ENCODE measurements at regions of chr10 and their contacts with region 1.

Region 1: DNA sequence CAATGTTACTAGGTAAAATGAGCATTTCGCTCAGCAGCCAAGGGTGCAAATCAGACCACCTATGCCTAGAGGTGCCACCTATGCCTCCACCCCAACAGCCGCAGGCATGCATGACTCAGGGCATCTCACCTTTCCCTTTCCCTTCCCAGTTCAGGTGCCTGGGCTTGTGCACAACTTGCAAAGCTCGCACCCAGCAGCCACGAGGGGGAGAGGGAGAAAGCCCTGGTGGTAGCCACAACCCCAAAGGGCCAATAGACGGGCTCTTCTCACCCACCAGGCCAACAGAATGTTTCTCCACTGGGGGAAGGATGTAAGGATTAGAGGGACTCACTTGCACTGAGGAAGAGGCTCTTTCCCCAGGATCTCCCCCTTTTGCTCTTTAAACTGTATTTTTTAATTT is 462.3 kb upstream of the PCDH15 start:
- DNase-seq: no peak
- H3K4me3 ChIP-seq: no peak overlapping the region
- H3K27ac ChIP-seq: no peak overlapping the region
- H3K4me1 ChIP-seq: no peaks in the 10 kb centered on the region
- H3K27me3 ChIP-seq: no peaks in the 10 kb centered on the region
- CTCF ChIP-seq: no peak

Region 2: DNA sequence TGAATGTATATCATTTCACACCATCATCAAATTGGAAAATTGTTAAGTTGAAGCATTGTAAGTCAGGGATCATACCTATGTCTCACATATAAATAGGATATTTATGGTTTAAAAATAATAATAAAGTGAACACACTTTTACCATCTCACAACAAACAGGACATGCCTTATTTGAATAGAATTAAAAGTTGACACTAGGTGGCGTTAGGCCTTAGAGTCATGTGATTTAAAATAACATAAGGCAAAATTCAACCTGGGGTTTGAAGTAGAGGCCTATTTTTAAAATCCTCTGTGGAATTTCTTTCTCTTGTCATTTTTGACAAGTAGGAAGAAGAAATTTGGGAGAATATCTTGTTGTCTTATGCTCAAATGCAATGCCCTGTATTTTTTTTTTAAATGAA is 277.6 kb before region 1 on chr10:
- intact Hi-C with region 1: no loop called
- DNase-seq: no peak
- H3K4me3 ChIP-seq: no peak overlapping the region
- H3K27ac ChIP-seq: no peak overlapping the region
- H3K4me1 ChIP-seq: no peaks in the 10 kb centered on the region
- H3K27me3 ChIP-seq: no peaks in the 10 kb centered on the region
- CTCF ChIP-seq: no peak

Region 3: GRCh38 chr10:55091691-55092328 is 171.5 kb before region 1 on chr10:
- intact Hi-C with region 1: loop called (anchors 5 kb)
- DNase-seq: no peak
- H3K4me3 ChIP-seq: no peak overlapping the region
- H3K27ac ChIP-seq: no peak overlapping the region
- H3K4me1 ChIP-seq: no peaks in the 10 kb centered on the region
- H3K27me3 ChIP-seq: no peaks in the 10 kb centered on the region
- CTCF ChIP-seq: peak; percentile 56

Region 4: GRCh38 chr10:55146032-55146431 is 117.3 kb before region 1 on chr10:
- intact Hi-C with region 1: no loop called
- DNase-seq: no peak
- H3K4me3 ChIP-seq: no peak overlapping the region
- H3K27ac ChIP-seq: no peak overlapping the region
- H3K4me1 ChIP-seq: no peaks in the 10 kb centered on the region
- H3K27me3 ChIP-seq: no peaks in the 10 kb centered on the region
- CTCF ChIP-seq: no peak

Measured in colonic mucosa (tissue), 4 donors.